ENCODE measurements at regions of chr19 and their contacts with region 1.

Region 1: GRCh38 chr19:12766051-12766521 is 9.3 kb downstream of the HOOK2 start:
- DNase-seq: peak; percentile 77
- H3K4me3 Mint-ChIP-seq: peak overlapping the region; percentile 69
- H3K27ac Mint-ChIP-seq: no peak overlapping the region
- H3K4me1 Mint-ChIP-seq: peaks cover 5% of the 10 kb centered on the region
- H3K27me3 Mint-ChIP-seq: no peaks in the 10 kb centered on the region
- CTCF ChIP-seq: peak; percentile 67

Region 2: DNA sequence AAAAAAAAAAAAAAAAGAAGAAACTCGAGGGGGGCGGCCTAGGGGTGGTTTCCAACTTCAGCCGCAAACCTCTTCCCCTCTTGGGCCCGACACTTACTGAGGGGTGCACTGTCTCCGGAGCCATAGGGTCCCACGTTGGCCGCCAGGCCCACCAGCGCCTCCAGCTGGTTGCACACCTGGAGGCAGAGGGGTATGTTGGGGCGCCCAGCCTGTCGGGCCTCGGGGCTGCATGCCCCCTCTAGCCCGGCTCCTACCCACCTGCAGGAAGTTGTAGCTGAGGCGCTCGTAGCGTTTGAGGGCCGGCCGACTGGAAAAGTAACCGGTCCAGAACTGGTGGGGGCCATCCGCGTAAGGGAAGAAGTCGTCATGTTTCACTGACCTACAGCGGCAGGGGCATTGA is 108.1 kb before region 1 on chr19:
- CTCF ChIA-PET with region 1: no interaction called
- POLR2A ChIA-PET with region 1: no interaction called
- intact Hi-C with region 1: no loop called
- DNase-seq: no peak
- H3K4me3 Mint-ChIP-seq: no peak overlapping the region
- H3K27ac Mint-ChIP-seq: no peak overlapping the region
- H3K4me1 Mint-ChIP-seq: no peaks in the 10 kb centered on the region
- H3K27me3 Mint-ChIP-seq: no peaks in the 10 kb centered on the region
- CTCF ChIP-seq: no peak

Region 3: GRCh38 chr19:12749938-12750521 is 16.1 kb before region 1 on chr19:
- CTCF ChIA-PET with region 1: interaction called, 75 read pairs
- POLR2A ChIA-PET with region 1: interaction called, 4 read pairs
- intact Hi-C with region 1: no loop called
- DNase-seq: peak; percentile 42
- H3K4me3 Mint-ChIP-seq: peak overlapping the region; percentile 58
- H3K27ac Mint-ChIP-seq: peak overlapping the region; percentile 76
- H3K4me1 Mint-ChIP-seq: peaks cover 24% of the 10 kb centered on the region
- H3K27me3 Mint-ChIP-seq: no peaks in the 10 kb centered on the region
- CTCF ChIP-seq: no peak

Region 4: DNA sequence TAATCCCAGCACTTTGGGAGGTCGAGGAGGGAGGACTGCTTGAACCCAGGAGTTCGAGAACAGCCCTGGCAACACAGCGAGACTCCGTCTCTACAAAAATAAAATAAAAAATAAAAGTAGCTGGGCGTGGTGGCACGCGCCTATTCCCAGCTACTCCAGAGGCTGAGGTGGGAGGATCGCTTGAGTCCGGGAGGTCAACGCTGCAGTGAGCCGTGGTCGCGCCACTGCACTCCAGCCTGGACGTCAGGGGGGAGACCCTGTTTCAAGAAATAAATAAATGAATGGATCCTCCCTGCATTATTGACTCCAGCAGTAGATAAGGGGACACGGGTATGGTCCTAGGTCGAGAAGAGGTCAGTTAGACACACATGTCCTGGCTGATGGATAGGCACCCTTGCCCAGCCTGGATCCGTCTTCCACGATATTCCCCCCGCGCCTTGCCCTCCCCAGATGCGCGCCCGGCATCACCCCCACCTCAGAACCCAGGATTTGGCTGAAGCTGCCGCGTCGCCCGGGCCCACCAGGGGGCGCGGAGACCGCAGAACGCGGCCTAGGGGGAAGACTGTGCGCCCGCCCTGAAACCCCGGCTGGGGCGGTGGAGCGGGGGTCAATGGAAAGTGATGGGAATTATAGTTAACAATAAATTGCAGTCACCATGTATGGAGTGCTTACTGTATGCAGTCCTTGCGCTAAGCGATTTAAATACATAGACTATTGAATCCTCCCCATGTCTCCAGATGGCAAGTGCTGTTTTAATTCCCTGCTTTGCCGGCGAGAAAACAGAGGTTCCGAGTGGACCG is 11.3 kb after region 1 on chr19:
- CTCF ChIA-PET with region 1: interaction called, 45 read pairs
- POLR2A ChIA-PET with region 1: interaction called, 9 read pairs
- intact Hi-C with region 1: no loop called
- DNase-seq: peak; percentile 80
- H3K4me3 Mint-ChIP-seq: peak overlapping the region; percentile 79
- H3K27ac Mint-ChIP-seq: peak overlapping the region; percentile 81
- H3K4me1 Mint-ChIP-seq: peaks cover 13% of the 10 kb centered on the region
- H3K27me3 Mint-ChIP-seq: no peaks in the 10 kb centered on the region
- CTCF ChIP-seq: peak; percentile 83

Region 5: GRCh38 chr19:12821761-12822160 is 55.7 kb after region 1 on chr19:
- CTCF ChIA-PET with region 1: no interaction called
- POLR2A ChIA-PET with region 1: no interaction called
- intact Hi-C with region 1: no loop called
- DNase-seq: no peak
- H3K4me3 Mint-ChIP-seq: no peak overlapping the region
- H3K27ac Mint-ChIP-seq: no peak overlapping the region
- H3K4me1 Mint-ChIP-seq: no peaks in the 10 kb centered on the region
- H3K27me3 Mint-ChIP-seq: no peaks in the 10 kb centered on the region
- CTCF ChIP-seq: no peak

Region 6: DNA sequence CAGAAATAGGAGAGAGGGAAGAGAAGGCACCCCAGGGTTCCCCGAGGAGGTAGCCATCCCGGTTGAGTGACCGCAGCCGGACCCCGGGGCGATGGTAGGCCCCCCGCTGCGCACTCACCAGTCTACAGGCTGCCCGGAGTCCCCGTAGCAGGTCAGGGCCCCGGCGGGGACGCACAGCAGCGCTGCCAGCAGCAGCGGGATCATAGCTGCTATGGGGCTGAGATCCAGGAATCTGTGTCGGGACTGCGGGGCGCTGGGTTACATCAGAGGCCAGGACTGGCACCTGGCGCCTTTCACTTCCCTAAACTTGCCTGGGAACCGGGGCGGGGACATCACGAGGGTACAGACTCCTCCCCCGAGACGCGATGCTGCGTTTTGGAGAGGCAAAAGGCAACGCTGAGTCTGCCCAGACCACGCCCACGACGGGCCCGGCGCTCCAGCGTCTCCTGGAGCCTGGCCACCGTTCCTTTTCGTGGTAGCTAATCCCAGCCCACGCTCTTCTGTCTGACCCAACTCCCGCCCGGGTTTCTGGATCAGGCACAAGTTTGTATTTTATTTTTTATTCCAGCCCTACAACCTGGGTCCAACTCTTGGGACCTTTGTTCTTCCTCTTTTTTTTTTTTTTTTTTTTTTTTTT is 115.2 kb after region 1 on chr19 and contains the start of gene DNASE2:
- CTCF ChIA-PET with region 1: no interaction called
- POLR2A ChIA-PET with region 1: no interaction called
- intact Hi-C with region 1: no loop called
- DNase-seq: peak; percentile 99
- H3K4me3 Mint-ChIP-seq: peak within 1 kb of the TSS; percentile 84
- H3K27ac Mint-ChIP-seq: peak within 1 kb of the TSS; percentile 90
- H3K4me1 Mint-ChIP-seq: no peaks in the 10 kb centered on the region
- H3K27me3 Mint-ChIP-seq: no peaks in the 10 kb centered on the region
- CTCF ChIP-seq: no peak
- total RNA-seq, gene DNASE2: 26.7 and 28.7 TPM in 2 replicates